Cardiac septum (tissue), 1 donor: ENCODE measurements at regions of chr2 and their contacts with region 1.

Region 1: DNA sequence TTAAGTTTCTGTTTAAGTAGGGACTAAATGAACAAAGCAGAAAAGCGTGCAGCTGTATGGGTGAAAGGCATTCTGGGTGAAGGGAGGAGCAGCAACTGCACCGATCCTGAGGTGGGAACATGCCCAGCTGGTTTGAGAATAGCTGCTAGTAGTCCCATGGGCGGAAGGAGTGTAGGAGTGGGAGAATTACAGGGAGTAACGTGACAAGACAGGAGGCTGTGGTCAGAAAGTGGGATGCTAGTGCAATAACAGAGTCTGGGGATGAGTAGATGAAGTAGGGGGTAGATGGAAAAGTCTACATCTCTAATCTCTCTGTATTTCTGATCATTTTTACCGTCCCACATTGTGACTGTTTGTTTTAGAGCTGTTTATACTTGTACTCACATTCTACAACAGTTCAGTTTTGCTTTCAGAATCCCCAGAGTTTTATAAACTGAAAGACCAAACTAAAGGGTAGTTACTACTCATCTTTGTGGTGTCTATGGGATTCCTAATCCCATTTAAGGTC is 118.9 kb downstream of the LCLAT1 start:
- DNase-seq: no peak

Region 2: GRCh38 chr2:30231212-30231995 is 334.5 kb before region 1 on chr2 and contains the start of gene LBH:
- intact Hi-C with region 1: loop called (anchors 5 kb)
- DNase-seq: peak; percentile 94
- total RNA-seq, gene LBH: 208 TPM

Region 3: GRCh38 chr2:30584116-30584515 is 18.2 kb after region 1 on chr2:
- intact Hi-C with region 1: no loop called
- DNase-seq: no peak